Brain microvascular endothelial cell (primary cell): ENCODE measurements at regions of chr7 and their contacts with region 1.

Region 1: DNA sequence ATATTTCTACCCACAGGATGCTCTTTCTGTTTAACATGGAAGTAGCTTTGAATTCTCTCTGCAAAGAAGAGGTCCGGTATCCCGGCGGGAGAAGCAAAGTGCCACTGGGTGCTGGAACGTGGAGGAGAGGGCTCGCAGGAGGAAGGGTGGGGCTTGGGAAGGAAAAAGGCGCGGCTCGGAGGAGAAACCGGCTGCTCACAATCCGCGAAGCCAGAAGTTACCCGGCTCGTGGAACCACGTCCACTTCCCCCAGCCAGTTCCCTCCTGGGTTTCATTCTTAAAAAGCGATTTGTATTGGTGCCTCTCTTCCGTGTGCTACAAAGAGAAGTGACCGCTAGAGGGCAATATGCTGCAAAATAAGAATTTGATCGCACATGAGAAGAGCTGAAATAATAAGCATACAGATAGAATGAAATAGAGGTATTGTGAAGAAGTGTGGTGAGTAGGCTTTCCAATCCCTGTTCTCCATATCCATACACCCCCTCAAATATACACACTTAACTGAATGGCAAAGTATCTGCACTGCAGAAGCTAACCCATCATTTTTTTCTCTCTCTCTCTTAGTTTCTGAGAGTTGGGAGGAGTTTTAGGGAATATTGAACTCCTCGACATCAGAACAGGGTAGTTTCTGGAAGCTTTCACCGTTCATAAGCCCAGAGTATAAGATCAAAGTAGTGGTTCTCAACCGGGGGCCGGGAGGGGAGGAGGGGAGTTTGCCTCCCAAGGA is 31.1 kb downstream of the TRIL start:
- DNase-seq: peak; percentile 86
- H3K4me3 ChIP-seq: peak overlapping the region; percentile 61
- H3K27ac ChIP-seq: no peak overlapping the region
- H3K27me3 ChIP-seq: no peaks in the 10 kb centered on the region
- CTCF ChIP-seq: peak; percentile 83

Region 2: DNA sequence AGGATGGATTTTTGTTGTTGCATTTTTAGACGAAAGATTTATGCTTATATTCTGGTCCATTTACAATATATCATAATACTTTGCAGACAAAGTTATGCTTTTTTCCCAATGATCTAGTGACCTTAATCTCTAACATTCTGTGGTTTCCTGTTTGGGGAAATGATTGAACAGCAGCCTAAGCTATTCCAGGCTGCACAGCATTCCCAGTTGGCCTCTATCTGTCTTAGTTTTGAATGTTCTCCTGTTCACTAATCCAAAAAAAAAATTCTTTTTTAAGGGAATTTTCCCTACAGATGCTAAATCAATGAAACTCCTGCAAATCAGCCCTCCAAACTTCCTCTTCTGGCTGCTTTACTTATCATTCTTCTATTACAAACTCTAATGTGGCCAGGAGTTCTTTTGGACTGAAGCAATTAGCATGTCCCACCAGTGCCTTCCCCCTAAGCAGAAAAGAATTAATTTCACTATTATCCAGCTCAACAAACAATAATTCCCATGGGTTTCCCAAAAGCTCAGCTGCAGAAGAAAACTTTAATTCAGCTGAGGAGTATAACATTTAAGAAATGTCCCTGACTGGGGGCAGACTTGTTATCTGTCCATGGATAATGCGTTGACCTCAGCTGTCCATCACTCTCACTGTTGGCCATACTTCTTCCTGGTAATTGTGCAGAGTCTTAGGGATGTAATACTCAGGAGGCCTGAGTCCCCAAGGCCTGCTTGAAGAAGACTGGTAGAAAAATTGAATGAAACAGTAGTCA is 113.0 kb after region 1 on chr7:
- in situ Hi-C with region 1: no loop called
- DNase-seq: no peak
- H3K4me3 ChIP-seq: no peak overlapping the region
- H3K27ac ChIP-seq: peak overlapping the region; percentile 12
- H3K27me3 ChIP-seq: no peaks in the 10 kb centered on the region
- CTCF ChIP-seq: no peak

Region 3: DNA sequence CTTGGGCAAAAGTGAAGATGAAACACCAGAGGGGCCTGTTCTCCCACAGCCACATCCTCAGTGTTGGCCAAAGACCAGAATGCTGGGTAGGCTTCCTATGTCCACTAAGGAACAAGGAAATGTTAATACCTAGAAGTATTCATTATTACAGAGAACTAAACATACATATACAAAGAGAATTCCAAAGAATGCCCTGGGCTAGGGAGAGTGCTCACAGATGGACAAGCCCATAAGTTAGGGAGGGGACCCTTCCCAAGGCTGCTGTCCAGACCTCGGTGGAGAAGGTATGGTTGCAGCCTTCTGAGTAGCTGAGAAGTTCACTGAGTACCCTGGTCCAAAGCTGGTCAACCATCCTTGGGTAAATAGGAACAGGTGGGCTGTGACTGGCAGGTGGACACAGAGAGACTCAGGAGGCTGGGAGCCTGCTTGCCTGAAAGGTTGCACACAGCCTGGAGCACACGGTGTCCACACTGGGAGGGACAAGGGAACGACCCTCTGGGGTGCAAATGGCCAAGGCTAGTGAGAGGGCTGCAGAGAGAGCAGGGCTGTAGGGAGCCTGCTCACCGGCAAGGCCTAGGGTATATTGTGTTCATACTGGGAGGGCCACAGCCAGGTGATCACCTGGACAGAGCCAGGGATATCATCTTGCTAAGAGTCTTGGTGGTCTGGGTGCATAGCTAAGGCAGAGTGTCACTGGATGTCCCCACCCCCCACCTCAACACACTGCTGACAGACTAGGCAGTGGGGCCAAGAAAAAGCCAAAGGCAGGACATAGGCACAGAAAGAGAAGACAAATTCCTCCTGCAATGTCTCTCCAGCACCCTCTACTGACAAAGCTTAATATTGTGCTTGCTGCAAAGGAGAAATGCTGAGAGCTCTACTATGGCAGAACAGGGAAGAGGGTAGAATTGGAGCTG is 179.0 kb after region 1 on chr7:
- in situ Hi-C with region 1: loop called (anchors 25 kb)
- DNase-seq: peak; percentile 62
- H3K4me3 ChIP-seq: no peak overlapping the region
- H3K27ac ChIP-seq: no peak overlapping the region
- H3K27me3 ChIP-seq: no peaks in the 10 kb centered on the region
- CTCF ChIP-seq: peak; percentile 92